Right ventricle myocardium superior (tissue), 1 donor: ENCODE measurements at regions of chr16 and their contacts with region 1.

Region 1: GRCh38 chr16:25106567-25107465 is 4.7 kb upstream of the LCMT1 start:
- DNase-seq: peak; percentile 98
- ATAC-seq: peak; percentile 92

Region 2: DNA sequence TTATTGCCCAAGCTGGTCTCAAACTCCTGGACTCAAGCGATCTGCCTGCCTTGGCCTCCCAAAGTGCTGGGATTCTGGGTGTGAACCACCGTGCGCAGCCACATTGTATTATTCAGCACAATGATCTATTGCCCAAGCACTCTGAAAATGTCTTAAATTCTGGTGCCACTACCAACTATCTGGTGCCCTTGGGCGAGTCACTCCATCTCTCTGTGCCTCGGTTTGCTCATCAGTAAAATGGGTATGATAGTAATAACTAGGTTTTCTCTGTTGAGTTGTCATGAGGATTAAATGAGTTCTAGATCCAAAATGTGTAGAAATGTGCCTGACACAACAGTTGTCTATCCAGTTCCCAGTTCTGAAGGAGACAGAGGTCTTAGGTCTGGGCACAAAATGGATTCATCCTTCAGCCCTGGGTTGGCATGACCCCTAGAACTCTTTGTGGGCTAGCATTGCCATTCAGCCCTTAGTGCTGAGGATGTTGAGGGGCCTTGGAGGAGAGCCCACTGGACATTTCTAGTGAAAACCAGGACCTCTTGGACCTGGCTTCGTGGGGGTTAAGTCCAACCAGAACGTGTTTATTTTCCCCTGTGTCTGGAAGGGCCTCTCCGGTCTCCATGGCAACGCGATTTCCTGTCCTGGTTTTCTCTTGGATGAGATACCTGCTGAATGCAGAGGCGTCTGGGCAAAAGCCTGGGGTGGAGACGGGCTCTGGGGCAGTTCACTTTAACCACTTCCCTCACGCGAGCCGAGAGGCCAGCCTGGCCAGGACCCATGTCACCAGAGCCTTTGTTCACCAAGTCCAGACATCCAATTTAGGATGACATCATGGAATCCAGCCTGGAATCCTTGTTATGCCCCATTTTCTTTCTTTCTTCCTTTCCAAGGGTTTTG is 421.0 kb before region 1 on chr16:
- intact Hi-C with region 1: no loop called
- DNase-seq: peak; percentile 56
- ATAC-seq: peak; percentile 41

Region 3: DNA sequence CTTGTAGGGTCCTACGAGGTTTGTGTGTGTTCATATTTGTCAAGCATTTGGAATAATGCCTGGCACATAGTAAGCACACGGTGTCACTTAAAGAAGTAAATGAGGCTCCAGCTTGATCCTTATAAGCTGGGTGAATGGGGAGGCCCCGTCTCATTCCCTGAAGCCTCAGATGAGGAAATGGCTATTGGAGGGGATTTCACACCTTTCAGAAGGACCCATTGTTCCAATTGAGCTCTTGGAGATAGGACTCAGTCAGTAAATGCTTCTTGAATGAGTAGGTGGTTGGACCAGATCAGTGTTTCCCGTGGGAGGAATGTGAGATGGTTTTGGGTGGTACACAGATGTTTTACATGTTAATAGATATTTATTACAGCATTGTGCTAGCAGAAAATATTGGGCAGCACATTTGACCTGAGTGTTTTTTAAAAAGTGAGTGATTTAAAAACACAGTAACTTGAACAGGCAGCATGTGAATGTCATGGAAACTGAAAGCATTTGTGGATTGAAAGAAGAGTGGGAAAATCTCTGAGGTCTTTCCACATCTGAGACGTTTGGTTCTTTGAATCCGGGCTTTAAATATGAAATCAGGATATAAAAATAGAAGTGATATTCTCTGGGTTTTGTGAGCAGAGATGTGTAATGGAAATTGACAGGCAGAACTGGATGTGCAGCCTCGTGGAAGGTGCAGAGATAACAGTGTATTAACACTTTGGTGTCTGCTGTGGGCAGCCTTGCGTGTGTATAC is 55.2 kb before region 1 on chr16:
- intact Hi-C with region 1: loop called (anchors 5 kb)
- DNase-seq: no peak
- ATAC-seq: peak; percentile 66

Region 4: GRCh38 chr16:25066747-25067631 is 39.8 kb before region 1 on chr16:
- intact Hi-C with region 1: loop called (anchors 5 kb)
- DNase-seq: peak; percentile 90
- ATAC-seq: peak; percentile 97

Region 5: DNA sequence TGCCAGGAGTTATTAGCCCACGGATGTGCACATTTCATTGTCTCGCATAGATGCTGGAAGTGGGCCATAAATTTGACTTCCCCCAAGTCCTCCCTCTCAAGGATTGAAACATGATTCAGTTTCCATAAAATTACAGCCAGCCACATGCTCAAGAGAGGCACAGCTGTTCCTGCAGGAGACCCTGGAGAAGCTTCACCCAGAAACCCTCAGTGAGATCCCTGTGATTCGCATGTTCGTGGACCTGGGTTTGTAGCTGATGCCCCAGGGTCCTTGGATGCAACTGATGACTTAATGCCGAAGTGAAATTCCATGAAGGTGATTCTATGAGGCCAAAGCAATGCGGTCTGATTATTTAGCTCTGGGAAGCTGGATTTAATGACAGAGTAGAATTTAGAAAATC is 85.3 kb after region 1 on chr16:
- intact Hi-C with region 1: no loop called
- DNase-seq: no peak
- ATAC-seq: no peak